Panc1 (cell line): ENCODE measurements at regions of chr6 and their contacts with region 1.

Region 1: GRCh38 chr6:44179072-44179536 is 20.5 kb downstream of the CAPN11 start:
- DNase-seq: peak; percentile 43
- ATAC-seq: peak; percentile 75
- H3K4me3 ChIP-seq: no peak overlapping the region; a peak in 1 of 4 replicates
- H3K27ac ChIP-seq: peak overlapping the region; percentile 90
- H3K4me1 ChIP-seq: peaks cover 44% of the 10 kb centered on the region
- H3K27me3 ChIP-seq: no peaks in the 10 kb centered on the region
- CTCF ChIP-seq: no peak

Region 2: GRCh38 chr6:42947950-42948349 is 1231.2 kb before region 1 on chr6:
- CTCF ChIA-PET with region 1: no interaction called
- POLR2A ChIA-PET with region 1: no interaction called
- in situ Hi-C with region 1: no loop called
- intact Hi-C with region 1: no loop called
- DNase-seq: no peak
- ATAC-seq: no peak
- H3K4me3 ChIP-seq: no peak overlapping the region
- H3K27ac ChIP-seq: no peak overlapping the region
- H3K4me1 ChIP-seq: no peaks in the 10 kb centered on the region
- H3K27me3 ChIP-seq: no peaks in the 10 kb centered on the region
- CTCF ChIP-seq: no peak

Region 3: GRCh38 chr6:44192428-44193041 is 13.4 kb after region 1 on chr6:
- CTCF ChIA-PET with region 1: interaction called, 13 read pairs
- POLR2A ChIA-PET with region 1: interaction called, 6 read pairs
- in situ Hi-C with region 1: no loop called
- intact Hi-C with region 1: no loop called
- DNase-seq: no peak
- ATAC-seq: no peak
- H3K4me3 ChIP-seq: no peak overlapping the region
- H3K27ac ChIP-seq: no peak overlapping the region
- H3K4me1 ChIP-seq: no peaks in the 10 kb centered on the region
- H3K27me3 ChIP-seq: no peaks in the 10 kb centered on the region
- CTCF ChIP-seq: no peak